CD8-positive, alpha-beta T cell (primary cell): ENCODE measurements at regions of chr19 and their contacts with region 1.

Region 1: DNA sequence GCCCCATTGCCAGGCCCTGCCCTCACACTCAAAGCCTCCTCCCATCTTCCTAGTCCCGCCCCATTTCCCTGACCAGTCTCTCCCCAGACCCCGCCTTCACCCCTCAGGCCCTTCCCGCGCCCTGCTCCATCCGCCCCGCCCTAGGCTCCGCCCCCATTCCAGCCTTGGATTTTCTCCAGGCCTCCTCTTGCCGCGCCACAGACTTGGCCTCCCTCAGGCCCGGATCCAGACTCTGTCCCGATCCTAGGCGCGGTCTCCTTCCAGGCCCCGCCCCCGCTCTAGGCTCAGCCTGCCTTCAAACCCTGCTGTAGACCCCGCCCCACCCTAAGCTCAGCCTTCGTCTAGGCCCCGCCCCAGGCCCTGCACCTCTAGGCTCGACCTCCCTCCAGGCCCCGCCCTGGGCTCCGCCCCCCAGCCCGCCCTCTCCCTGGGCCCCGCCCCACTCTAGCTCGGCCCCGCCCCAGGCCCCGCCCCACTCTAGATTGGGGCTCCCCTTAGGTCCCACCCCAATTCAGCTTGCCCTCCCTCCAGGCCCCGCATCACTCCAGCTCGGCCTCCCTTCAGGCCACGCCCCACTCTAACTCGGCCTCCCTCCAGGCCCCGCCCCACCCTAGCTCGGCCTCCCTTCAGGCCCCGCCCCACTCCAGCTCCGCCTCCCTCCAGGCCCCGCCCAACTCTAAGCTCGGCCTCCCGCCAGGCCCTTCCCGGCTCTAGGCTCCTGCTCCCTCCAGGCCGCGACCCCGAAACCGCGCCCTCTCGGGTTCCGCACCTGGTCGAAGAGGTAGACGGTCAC is 18.5 kb downstream of the LMTK3 start:
- DNase-seq: peak; percentile 68 to 89 (median 80)
- ATAC-seq: peak; percentile 79
- H3K4me3 ChIP-seq: peak overlapping the region; percentile 41 to 58
- H3K4me3 Mint-ChIP-seq: peak overlapping the region; percentile 71
- H3K27ac ChIP-seq: no peak overlapping the region
- H3K27ac Mint-ChIP-seq: no peak overlapping the region
- H3K4me1 ChIP-seq: peaks cover 38% of the 10 kb centered on the region
- H3K4me1 Mint-ChIP-seq: peaks cover 38% of the 10 kb centered on the region
- H3K27me3 ChIP-seq: peaks cover 0 to 19% of the 10 kb centered on the region in 2 experiments
- H3K27me3 Mint-ChIP-seq: peaks cover 3% of the 10 kb centered on the region
- CTCF ChIP-seq: no peak

Region 2: DNA sequence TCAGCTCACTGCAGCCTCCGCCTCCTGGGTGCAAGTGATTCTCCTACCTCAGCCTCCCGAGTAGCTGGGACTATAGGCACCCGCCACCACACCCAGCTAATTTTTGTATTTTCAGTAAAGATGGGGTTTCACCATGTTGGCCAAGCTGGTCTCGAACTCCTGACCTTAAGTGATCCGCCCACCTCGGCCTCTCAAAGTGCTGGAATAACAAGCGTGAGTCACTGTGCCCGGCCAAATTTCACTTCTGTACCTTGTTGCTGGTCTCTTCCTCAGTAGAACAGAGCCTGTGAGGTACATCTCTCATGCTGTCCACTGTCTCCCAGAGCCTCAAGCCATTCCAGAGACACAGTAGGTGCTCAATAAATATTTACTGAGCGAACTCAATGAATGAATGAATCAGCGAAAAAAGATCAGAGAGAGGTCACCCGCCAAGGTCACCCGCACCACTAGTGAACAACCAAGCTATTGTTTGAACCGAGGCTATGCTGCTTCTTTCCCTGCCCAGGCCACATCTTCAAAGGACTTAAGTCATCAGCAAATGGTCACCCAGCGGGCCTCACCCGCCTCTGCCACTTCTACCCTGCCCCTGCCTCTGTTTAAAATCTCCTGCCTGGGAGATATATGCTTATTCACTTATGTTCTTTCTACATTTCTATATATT is 138.7 kb before region 1 on chr19:
- CTCF ChIA-PET with region 1: no interaction called
- POLR2A ChIA-PET with region 1: no interaction called
- intact Hi-C with region 1: no loop called
- DNase-seq: no peak
- ATAC-seq: no peak
- H3K4me3 ChIP-seq: no peak overlapping the region
- H3K4me3 Mint-ChIP-seq: no peak overlapping the region
- H3K27ac ChIP-seq: no peak overlapping the region
- H3K27ac Mint-ChIP-seq: no peak overlapping the region
- H3K4me1 ChIP-seq: no peaks in the 10 kb centered on the region
- H3K4me1 Mint-ChIP-seq: peaks cover 3% of the 10 kb centered on the region
- H3K27me3 ChIP-seq: no peaks in the 10 kb centered on the region
- H3K27me3 Mint-ChIP-seq: no peaks in the 10 kb centered on the region
- CTCF ChIP-seq: no peak

Region 3: GRCh38 chr19:48391107-48391986 is 101.8 kb before region 1 on chr19 and contains the start of gene KDELR1:
- CTCF ChIA-PET with region 1: interaction called, 3 read pairs
- POLR2A ChIA-PET with region 1: no interaction called
- intact Hi-C with region 1: loop called (anchors 5 to 10 kb)
- DNase-seq: peak; percentile 53 to 86 (median 76)
- ATAC-seq: peak; percentile 85
- H3K4me3 ChIP-seq: peak within 1 kb of the TSS; percentile 75 to 81
- H3K4me3 Mint-ChIP-seq: peak within 1 kb of the TSS; percentile 92
- H3K27ac ChIP-seq: peak within 1 kb of the TSS; percentile 87 to 92
- H3K27ac Mint-ChIP-seq: peak within 1 kb of the TSS; percentile 95
- H3K4me1 ChIP-seq: peaks cover 37% of the 10 kb centered on the region
- H3K4me1 Mint-ChIP-seq: peaks cover 39% of the 10 kb centered on the region
- H3K27me3 ChIP-seq: peaks cover 24 to 31% of the 10 kb centered on the region in 2 experiments
- H3K27me3 Mint-ChIP-seq: peaks cover 15% of the 10 kb centered on the region
- CTCF ChIP-seq: peak; percentile 96
- total RNA-seq, gene KDELR1: 29.7 to 33.1 TPM

Region 4: DNA sequence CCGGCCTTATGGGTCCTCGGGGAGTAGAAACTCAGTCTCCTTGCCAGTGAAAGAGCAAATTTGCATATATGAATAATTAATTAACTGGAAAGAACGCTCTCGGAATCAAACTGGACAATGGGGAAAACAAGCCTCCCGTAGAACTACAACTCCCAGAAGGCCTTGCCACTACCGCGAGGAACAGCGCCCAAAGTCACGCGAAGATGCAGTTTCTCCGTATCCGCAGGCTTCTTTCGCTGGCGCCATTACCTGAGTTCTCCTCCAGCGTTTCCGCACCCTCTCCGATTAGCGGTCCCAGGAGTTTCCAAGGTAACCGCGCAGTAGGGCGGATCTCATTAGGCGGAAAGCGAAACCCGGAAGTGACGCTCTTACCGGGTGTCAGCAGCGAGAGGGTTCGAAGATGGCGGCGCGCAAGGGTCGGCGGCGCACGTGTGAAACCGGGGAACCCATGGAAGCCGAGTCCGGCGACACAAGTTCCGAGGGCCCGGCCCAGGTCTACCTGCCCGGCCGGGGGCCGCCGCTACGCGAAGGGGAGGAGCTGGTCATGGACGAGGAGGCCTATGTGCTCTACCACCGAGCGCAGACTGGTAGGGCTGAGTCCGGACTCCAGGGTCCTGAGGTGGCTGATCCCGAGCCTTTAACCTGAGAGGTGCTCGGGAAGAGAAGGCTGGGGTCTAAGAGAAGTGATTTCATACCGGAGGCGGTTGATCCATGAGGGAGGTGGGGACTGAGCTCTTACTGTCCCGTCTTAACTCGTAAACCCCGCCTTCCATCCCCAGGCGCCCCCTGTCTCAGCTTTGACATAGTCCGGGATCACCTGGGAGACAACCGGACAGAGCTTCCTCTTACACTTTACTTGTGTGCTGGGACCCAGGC is 47.3 kb before region 1 on chr19 and contains the start of gene GRWD1:
- CTCF ChIA-PET with region 1: interaction called, 4 read pairs
- POLR2A ChIA-PET with region 1: no interaction called
- intact Hi-C with region 1: loop called in 1 of 2 experiments (anchors 1 kb)
- DNase-seq: peak; percentile 83 to 98 (median 91)
- ATAC-seq: peak; percentile 93
- H3K4me3 ChIP-seq: peak within 1 kb of the TSS; percentile 82 to 90
- H3K4me3 Mint-ChIP-seq: peak within 1 kb of the TSS; percentile 93
- H3K27ac ChIP-seq: peak within 1 kb of the TSS; percentile 79 to 89
- H3K27ac Mint-ChIP-seq: peak within 1 kb of the TSS; percentile 95
- H3K4me1 ChIP-seq: peaks cover 24% of the 10 kb centered on the region
- H3K4me1 Mint-ChIP-seq: peaks cover 40% of the 10 kb centered on the region
- H3K27me3 ChIP-seq: peaks cover 19 to 22% of the 10 kb centered on the region in 2 experiments
- H3K27me3 Mint-ChIP-seq: peaks cover 18% of the 10 kb centered on the region
- CTCF ChIP-seq: no peak
- total RNA-seq, gene GRWD1: 36.1 to 41.7 TPM

Region 5: GRCh38 chr19:48480558-48481500 is 12.3 kb before region 1 on chr19:
- CTCF ChIA-PET with region 1: interaction called, 25 read pairs
- POLR2A ChIA-PET with region 1: interaction called, 6 read pairs
- intact Hi-C with region 1: loop called in 1 of 2 experiments (anchors 1 kb)
- DNase-seq: peak in 8 of 9 experiments; percentile 45 to 78 (median 59)
- ATAC-seq: peak; percentile 82
- H3K4me3 ChIP-seq: peak overlapping the region; percentile 63 to 66
- H3K4me3 Mint-ChIP-seq: peak overlapping the region; percentile 83
- H3K27ac ChIP-seq: peak overlapping the region; percentile 53 to 72
- H3K27ac Mint-ChIP-seq: peak overlapping the region; percentile 84
- H3K4me1 ChIP-seq: peaks cover 4% of the 10 kb centered on the region
- H3K4me1 Mint-ChIP-seq: peaks cover 19% of the 10 kb centered on the region
- H3K27me3 ChIP-seq: no peaks in the 10 kb centered on the region
- H3K27me3 Mint-ChIP-seq: no peaks in the 10 kb centered on the region
- CTCF ChIP-seq: no peak

Region 6: GRCh38 chr19:48588670-48589399 is 95.7 kb after region 1 on chr19:
- CTCF ChIA-PET with region 1: interaction called, 84 read pairs
- POLR2A ChIA-PET with region 1: no interaction called
- intact Hi-C with region 1: loop called (anchors 1 kb)
- DNase-seq: peak; percentile 75 to 92 (median 87)
- ATAC-seq: peak; percentile 89
- H3K4me3 ChIP-seq: peak overlapping the region; percentile 40 to 56
- H3K4me3 Mint-ChIP-seq: peak overlapping the region; percentile 83
- H3K27ac ChIP-seq: peak overlapping the region in 1 of 2 experiments; percentile 54
- H3K27ac Mint-ChIP-seq: peak overlapping the region; percentile 70
- H3K4me1 ChIP-seq: peaks cover 7% of the 10 kb centered on the region
- H3K4me1 Mint-ChIP-seq: peaks cover 22% of the 10 kb centered on the region
- H3K27me3 ChIP-seq: peaks cover 0 to 3% of the 10 kb centered on the region in 2 experiments
- H3K27me3 Mint-ChIP-seq: peaks cover 4% of the 10 kb centered on the region
- CTCF ChIP-seq: peak; percentile 92